Body of pancreas (tissue), 4 donors: ENCODE measurements at regions of chr12 and their contacts with region 1.

Region 1: DNA sequence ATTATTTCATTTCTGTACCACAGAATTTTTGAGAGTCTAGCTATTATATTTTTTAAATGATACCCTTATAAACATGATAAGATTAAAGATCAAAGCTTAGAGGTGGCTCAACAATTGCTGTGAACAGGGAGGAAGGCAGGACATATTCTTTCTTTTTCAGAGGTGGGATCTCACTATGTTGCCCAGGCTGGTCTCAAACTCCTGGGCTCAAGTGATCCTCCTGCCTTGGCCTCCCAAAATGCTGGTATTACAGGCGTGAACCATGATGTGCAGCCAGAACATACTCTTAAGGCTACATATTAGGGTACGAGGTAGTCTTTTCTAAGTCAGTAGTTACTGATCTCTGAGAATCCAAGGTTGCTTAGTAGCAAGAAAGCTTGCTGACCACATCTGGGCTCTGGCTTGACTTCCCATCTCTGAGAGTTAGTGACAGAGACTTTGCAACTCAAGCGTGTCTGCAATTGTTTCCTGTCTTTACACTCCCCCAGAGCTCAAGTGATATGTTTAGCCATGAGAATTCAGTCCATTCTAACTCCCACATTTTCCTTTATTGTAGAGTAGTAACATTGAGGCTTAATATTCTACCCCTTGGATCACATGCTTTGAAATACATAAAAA is 8.6 kb downstream of the RAB5B start:
- DNase-seq: no peak
- ATAC-seq: no peak
- H3K4me3 ChIP-seq: no peak overlapping the region
- H3K27ac ChIP-seq: no peak overlapping the region
- H3K4me1 ChIP-seq: no peaks in the 10 kb centered on the region
- H3K27me3 ChIP-seq: no peaks in the 10 kb centered on the region
- CTCF ChIP-seq: no peak
- POLR2A ChIP-seq: no peak

Region 2: GRCh38 chr12:56062996-56063395 is 80.6 kb after region 1 on chr12:
- intact Hi-C with region 1: no loop called
- DNase-seq: no peak
- ATAC-seq: no peak
- H3K4me3 ChIP-seq: no peak overlapping the region
- H3K27ac ChIP-seq: no peak overlapping the region
- H3K4me1 ChIP-seq: no peaks in the 10 kb centered on the region
- H3K27me3 ChIP-seq: no peaks in the 10 kb centered on the region
- CTCF ChIP-seq: no peak
- POLR2A ChIP-seq: no peak

Region 3: DNA sequence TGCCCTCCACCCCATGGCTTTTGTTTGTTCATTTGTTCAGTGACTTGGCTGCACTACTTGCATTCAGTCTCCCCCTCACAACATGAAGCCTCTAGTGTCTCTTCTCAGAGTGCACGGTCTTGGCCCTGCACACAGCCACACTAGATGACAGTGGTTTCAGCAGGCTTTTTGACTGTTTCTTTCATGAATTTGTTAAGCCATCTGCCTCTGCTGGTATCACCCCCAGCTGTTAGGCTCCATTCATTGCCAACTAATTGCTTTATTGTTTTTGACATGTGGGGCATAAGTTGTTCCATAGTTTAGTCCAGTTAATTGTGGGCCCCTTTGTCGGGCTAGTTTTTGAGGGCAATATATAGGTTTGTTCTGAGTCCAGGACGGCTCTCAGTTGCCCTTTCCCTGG is 1730.3 kb after region 1 on chr12:
- intact Hi-C with region 1: loop called (anchors 10 kb)
- DNase-seq: no peak
- ATAC-seq: no peak
- H3K4me3 ChIP-seq: no peak overlapping the region
- H3K27ac ChIP-seq: no peak overlapping the region
- H3K4me1 ChIP-seq: no peaks in the 10 kb centered on the region
- H3K27me3 ChIP-seq: no peaks in the 10 kb centered on the region
- CTCF ChIP-seq: no peak
- POLR2A ChIP-seq: no peak